ENCODE measurements at regions of chr11 and their contacts with region 1.

Region 1: DNA sequence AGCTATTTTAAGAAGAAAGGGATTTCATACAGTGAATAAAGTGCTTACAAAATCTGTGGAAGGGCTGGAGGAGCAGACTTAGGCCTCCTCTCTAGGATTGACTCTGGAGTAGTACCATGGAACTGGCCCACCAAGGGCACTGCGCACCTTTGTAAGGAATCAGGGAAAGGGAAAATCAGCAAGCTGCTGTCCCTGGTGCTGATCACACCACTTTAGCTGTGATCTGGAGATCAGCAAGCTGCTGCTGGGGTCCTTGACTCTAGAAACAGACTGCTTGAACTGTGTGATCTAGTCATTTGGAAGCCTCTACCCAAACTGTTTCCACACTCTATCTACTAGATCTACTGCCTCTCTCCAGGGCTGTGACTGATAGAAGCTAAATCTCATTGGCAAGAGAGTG is 18.4 kb upstream of the TECTA start:
- DNase-seq: no peak
- ATAC-seq: no peak

Region 2: DNA sequence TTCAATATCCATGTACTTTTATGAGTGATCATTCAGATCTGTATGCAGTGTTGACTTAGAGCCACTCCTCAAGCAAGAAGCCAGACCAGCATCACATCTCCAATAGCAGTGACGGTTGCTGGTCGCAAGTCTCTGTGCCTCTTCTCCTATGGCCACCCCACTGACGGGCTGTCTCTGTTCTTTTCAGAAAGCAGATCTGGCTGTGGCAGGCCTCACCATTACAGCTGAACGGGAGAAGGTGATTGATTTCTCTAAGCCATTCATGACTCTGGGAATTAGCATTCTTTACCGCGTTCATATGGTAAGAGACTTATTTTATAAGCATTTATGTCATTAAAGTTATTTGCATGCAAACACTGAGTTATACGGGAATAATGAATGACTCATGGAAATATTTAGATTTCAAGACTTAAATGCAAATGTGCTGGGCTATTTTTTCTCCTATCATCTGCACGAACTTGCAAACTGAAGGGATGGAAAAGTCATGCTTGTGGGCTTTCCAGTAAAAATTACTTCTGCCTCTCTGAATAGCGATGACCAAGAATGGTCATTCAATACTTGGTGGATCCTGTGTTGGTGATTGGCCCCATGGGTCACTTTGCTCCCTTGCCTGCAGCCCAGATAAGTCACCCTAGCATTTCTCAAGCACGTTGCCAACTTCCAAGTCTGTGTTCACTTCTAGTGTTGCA is 142.4 kb before region 1 on chr11:
- intact Hi-C with region 1: loop called (anchors 5 kb)
- DNase-seq: no peak
- ATAC-seq: no peak

Region 3: GRCh38 chr11:120991830-120992686 is 90.6 kb before region 1 on chr11:
- intact Hi-C with region 1: no loop called
- DNase-seq: no peak
- ATAC-seq: no peak

Region 4: GRCh38 chr11:121112498-121113455 is 30.1 kb after region 1 on chr11:
- intact Hi-C with region 1: no loop called
- DNase-seq: peak; percentile 71
- ATAC-seq: peak; percentile 89

Region 5: GRCh38 chr11:121383716-121384115 is 301.0 kb after region 1 on chr11:
- intact Hi-C with region 1: no loop called
- DNase-seq: no peak
- ATAC-seq: no peak

Region 6: DNA sequence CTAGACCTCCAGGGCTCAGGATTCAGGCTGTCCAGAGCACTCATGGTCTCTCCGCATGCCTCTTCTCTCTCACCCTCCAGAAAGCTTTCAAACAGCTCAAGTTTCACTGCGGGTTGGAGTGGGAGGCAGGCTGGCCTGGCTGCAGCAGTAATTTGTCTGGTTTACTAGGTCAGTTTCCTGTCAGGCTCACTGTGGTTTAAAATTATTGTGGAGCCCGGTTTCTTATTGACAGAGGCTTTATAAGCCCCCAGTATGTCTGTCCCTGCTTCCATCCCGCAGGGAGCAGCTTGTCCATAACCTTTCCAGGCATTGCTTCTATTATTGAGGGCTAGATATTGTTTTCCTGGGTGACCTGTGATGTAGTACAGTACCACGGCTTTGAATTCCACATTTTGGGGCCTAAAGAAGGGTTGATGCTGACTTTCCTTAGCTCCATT is 605.4 kb after region 1 on chr11:
- intact Hi-C with region 1: no loop called
- DNase-seq: no peak
- ATAC-seq: peak; percentile 62

Measured in sciatic nerve (tissue), 2 donors.